ENCODE measurements at regions of chr19 and their contacts with region 1.

Region 1: DNA sequence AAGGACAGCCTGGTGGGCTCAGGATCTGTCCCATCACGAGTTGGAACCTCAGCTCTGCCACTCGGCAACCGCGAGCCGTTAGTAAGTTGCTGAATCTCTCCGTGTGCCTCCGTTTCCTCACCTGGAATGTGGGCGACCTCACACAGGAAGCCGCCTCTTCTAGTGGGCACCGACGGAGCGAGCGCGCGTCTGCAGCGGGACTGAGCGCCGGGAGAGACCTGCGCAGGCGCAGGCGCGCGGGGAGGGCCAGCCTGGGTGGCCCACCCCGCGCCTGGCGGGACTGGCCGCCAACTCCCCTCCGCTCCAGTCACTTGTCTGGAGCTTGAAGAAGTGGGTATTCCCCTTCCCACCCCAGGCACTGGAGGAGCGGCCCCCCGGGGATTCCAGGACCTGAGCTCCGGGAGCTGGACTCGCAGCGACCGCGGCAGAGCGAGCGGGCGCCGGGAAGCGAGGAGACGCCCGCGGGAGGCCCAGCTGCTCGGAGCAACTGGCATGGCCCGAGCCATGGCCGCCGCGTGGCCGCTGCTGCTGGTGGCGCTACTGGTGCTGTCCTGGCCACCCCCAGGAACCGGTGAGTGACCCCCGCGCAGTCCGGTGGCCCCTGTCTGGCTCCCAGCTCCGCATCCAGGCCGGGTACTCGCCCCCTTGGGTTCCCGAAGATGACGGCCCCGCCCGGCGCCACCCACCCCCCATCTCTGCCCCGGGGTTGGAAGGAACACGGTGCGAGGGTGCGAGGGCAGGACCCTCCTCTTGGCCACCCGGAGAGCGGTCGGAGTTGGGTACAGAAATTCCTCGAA is at the start of gene PVR:
- DNase-seq: peak; percentile 92
- H3K4me3 Mint-ChIP-seq: peak within 1 kb of the TSS; percentile 91
- H3K27ac Mint-ChIP-seq: peak within 1 kb of the TSS; percentile 62
- H3K4me1 Mint-ChIP-seq: peaks cover 70% of the 10 kb centered on the region
- H3K27me3 Mint-ChIP-seq: no peaks in the 10 kb centered on the region
- CTCF ChIP-seq: no peak
- total RNA-seq, gene PVR: 176 and 215 TPM in 2 replicates

Region 2: DNA sequence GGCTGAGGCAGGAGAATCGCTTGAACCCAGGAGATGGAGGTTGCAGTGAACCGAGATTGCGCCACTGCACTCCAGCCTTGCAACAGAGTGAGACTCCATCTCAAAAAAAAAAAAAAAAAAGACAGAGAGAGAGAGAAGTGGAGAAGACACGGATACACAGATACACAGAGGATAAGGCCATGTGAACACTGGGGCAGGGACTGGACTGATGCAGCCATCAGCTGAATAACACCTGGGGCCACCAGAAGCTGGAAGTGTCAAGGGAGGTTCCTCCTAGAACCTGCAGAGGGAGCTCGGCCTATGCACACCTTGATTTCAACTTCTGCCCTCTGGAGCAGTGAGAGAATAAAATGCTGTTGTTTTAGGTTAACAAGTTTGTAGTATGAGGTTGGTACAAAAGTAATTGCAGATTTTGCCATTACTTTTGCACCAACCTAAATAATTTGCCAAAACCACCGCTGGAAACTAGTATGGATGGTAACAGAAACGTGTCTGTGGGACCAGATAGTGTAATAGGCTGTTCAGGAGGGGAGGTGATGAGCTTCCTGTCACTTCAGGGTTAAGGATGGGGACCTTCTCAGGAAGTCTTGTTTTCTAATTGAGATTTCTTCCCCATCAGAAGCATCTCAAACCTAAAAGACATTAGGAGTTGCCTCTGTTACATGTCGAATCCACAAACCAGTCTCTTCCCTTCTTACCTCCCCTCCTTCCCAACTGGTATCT is 66.8 kb before region 1 on chr19:
- CTCF ChIA-PET with region 1: interaction called, 10 read pairs
- intact Hi-C with region 1: no loop called
- DNase-seq: peak; percentile 78
- H3K4me3 Mint-ChIP-seq: no peak overlapping the region
- H3K27ac Mint-ChIP-seq: no peak overlapping the region
- H3K4me1 Mint-ChIP-seq: peaks cover 43% of the 10 kb centered on the region
- H3K27me3 Mint-ChIP-seq: no peaks in the 10 kb centered on the region
- CTCF ChIP-seq: peak; percentile 94

Region 3: DNA sequence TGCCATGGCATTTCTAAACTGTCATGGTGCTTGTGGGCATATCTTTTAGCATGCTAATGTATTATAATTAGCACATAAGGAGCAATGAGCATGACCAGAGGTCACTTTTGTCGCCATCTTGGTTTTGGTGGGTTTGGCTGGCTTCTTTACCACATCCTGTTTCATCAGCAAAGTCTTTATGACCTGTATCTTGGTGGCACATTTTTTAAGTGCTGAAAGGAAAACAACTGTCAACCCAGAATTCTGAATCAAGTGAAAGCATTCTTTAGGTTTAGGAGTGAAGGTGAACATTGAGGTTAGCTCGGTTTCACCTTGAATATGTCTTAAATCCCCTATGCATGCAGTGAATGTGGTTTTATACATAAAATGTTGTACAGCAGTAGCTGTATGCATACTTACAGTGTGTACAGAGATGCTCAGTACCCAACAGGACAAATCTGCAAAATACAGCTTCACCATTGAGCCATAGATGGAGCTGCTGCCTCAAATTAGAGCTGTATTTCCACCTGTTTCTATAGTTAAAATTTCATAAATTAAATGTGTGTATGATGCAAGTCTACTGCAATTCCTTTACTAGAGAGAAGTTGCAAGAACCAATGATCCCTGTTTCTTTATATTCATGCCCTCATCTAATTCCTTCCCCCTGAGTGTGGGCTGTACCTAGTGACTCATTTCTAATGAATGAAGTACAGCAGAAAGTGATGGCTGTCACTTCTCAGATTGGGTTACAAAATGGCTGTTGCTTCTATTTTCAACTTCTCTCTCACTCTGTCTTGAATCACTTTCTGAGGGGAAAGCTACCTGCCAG is 55.6 kb before region 1 on chr19:
- CTCF ChIA-PET with region 1: interaction called, 12 read pairs
- intact Hi-C with region 1: loop called (anchors 2 kb)
- DNase-seq: peak; percentile 68
- H3K4me3 Mint-ChIP-seq: peak overlapping the region; percentile 59
- H3K27ac Mint-ChIP-seq: peak overlapping the region; percentile 100
- H3K4me1 Mint-ChIP-seq: peaks cover 75% of the 10 kb centered on the region
- H3K27me3 Mint-ChIP-seq: no peaks in the 10 kb centered on the region
- CTCF ChIP-seq: peak; percentile 19

Region 4: GRCh38 chr19:44626048-44626624 is 17.7 kb before region 1 on chr19:
- CTCF ChIA-PET with region 1: no interaction called
- intact Hi-C with region 1: loop called (anchors 1 kb)
- DNase-seq: peak; percentile 80
- H3K4me3 Mint-ChIP-seq: no peak overlapping the region
- H3K27ac Mint-ChIP-seq: peak overlapping the region; percentile 70
- H3K4me1 Mint-ChIP-seq: peaks cover 31% of the 10 kb centered on the region
- H3K27me3 Mint-ChIP-seq: no peaks in the 10 kb centered on the region
- CTCF ChIP-seq: no peak

Measured in Calu3 (cell line).